BJ (cell line): ENCODE measurements at regions of chr16 and their contacts with region 1.

Region 1: DNA sequence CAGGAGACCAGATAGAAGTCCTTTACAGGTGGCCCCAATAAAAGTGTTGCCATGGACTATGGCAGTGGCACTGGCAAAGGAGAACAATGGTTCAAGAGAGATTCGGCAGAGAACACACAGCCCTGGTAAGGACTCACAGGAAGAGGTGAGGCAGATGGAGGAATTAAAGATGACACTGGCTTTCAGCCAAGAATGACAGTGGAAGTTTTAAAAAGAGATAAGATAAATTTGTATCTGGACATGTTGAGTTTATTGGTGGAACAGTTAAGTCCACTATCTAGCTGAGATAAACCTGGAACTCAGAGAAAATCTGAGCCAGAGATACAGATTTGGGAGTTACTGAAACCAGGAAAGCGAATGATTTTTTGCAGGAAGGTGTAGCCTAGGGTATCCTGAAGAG is 20.1 kb downstream of the CMC2 start:
- DNase-seq: no peak
- H3K4me3 ChIP-seq: no peak overlapping the region
- H3K27me3 ChIP-seq: no peaks in the 10 kb centered on the region
- CTCF ChIP-seq: no peak

Region 2: GRCh38 chr16:80862160-80862705 is 124.3 kb before region 1 on chr16:
- CTCF ChIA-PET with region 1: no interaction called
- POLR2A ChIA-PET with region 1: no interaction called
- DNase-seq: no peak
- H3K4me3 ChIP-seq: no peak overlapping the region
- H3K27me3 ChIP-seq: no peaks in the 10 kb centered on the region
- CTCF ChIP-seq: no peak

Region 3: GRCh38 chr16:80974649-80975376 is 11.7 kb before region 1 on chr16:
- CTCF ChIA-PET with region 1: interaction called, 6 read pairs
- POLR2A ChIA-PET with region 1: interaction called, 14 read pairs
- DNase-seq: no peak
- H3K4me3 ChIP-seq: no peak overlapping the region
- H3K27me3 ChIP-seq: no peaks in the 10 kb centered on the region
- CTCF ChIP-seq: peak; percentile 36

Region 4: DNA sequence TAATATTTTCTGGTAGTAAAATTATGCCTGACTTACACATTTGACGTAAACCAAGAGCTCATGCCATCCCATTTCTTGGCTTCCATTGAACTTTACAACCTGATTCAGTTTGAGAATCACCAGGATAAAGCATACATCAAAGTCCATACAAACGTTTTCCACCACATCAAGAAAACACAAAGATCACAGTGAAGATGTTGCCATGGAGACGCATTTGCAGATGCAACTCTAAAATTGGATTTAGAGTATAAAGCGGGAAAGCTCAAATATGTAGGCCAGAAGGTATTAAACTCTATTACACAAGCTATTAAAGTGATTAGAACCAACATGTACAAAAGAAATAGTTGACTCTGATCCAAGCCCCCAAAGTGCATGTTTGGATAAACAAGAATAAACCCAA is 80.1 kb after region 1 on chr16:
- CTCF ChIA-PET with region 1: no interaction called
- POLR2A ChIA-PET with region 1: no interaction called
- DNase-seq: no peak
- H3K4me3 ChIP-seq: no peak overlapping the region
- H3K27me3 ChIP-seq: no peaks in the 10 kb centered on the region
- CTCF ChIP-seq: no peak

Region 5: GRCh38 chr16:81189100-81189664 is 202.6 kb after region 1 on chr16:
- CTCF ChIA-PET with region 1: no interaction called
- POLR2A ChIA-PET with region 1: no interaction called
- DNase-seq: no peak
- H3K4me3 ChIP-seq: no peak overlapping the region
- H3K27me3 ChIP-seq: peaks cover 1% of the 10 kb centered on the region; the same call in 1 of the 2 replicates
- CTCF ChIP-seq: no peak

Region 6: GRCh38 chr16:81778861-81779535 is 792.4 kb after region 1 on chr16 and contains the start of gene PLCG2:
- CTCF ChIA-PET with region 1: no interaction called
- POLR2A ChIA-PET with region 1: no interaction called
- DNase-seq: no peak
- H3K4me3 ChIP-seq: peak within 1 kb of the TSS; percentile 31
- H3K27me3 ChIP-seq: peaks cover 24% of the 10 kb centered on the region
- CTCF ChIP-seq: no peak
- polyA plus RNA-seq, gene PLCG2: 0.20 and 0.22 TPM in 2 replicates